WTC11 (cell line): ENCODE measurements at regions of chr2 and their contacts with region 1.

Region 1: GRCh38 chr2:239934571-239935171 is 90.5 kb downstream of the NDUFA10 start:
- DNase-seq: peak; percentile 81
- ATAC-seq: peak; percentile 90
- H3K4me3 Mint-ChIP-seq: no peak overlapping the region
- H3K27ac Mint-ChIP-seq: no peak overlapping the region
- H3K4me1 Mint-ChIP-seq: no peaks in the 10 kb centered on the region; the same call in 1 of the 2 replicates
- H3K27me3 Mint-ChIP-seq: no peaks in the 10 kb centered on the region; the same call in 1 of the 2 replicates
- CTCF ChIP-seq: peak; percentile 76

Region 2: DNA sequence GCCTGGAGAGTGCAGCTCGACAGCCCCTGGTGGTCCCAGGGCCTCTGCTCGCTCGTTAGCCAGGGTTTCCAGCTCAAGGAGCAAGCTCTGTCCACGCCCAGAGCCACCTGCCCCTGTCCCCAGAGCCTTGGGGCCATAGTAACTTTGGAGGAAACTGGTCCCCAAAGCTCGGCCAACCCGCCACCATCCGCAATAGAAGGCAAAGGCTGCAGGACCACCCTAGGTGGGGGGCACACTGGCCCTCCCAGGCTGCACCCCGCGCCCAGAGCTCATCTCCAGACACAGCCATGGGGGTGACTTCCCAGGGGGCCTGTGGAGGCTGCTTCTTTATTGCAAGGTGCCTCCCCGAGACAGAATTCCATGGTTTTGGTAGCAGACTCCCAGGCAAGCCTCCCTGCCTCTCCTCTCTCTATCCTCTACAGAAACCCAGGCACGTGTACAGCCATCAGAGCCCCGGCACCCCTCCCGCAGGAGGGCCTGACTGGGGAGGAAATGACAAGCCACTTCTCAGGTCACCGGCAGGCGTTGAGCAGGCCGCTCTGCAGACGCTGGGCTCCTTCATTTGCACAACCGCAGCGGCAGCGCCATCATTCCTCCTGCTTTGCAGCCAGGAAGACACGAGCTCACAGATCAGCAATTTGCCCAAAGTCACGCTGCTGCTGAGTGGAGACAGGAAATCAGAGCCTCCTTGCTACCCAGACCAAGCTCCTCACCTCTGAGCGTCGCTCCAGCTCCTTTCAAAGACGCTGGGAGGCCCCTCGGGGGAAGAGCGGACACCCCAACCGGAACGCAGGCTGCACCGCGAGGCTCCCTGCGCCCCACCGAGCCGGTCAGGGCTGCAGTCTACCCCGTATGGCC is 10.3 kb after region 1 on chr2:
- CTCF ChIA-PET with region 1: interaction called, 22 read pairs
- POLR2A ChIA-PET with region 1: no interaction called
- DNase-seq: no peak
- ATAC-seq: no peak
- H3K4me3 Mint-ChIP-seq: no peak overlapping the region
- H3K27ac Mint-ChIP-seq: peak overlapping the region; percentile 49
- H3K4me1 Mint-ChIP-seq: 0 out of 2 replicates have a peak, but pooled peaks cover 3% of the 10 kb centered on the region
- H3K27me3 Mint-ChIP-seq: no peaks in the 10 kb centered on the region
- CTCF ChIP-seq: no peak

Region 3: DNA sequence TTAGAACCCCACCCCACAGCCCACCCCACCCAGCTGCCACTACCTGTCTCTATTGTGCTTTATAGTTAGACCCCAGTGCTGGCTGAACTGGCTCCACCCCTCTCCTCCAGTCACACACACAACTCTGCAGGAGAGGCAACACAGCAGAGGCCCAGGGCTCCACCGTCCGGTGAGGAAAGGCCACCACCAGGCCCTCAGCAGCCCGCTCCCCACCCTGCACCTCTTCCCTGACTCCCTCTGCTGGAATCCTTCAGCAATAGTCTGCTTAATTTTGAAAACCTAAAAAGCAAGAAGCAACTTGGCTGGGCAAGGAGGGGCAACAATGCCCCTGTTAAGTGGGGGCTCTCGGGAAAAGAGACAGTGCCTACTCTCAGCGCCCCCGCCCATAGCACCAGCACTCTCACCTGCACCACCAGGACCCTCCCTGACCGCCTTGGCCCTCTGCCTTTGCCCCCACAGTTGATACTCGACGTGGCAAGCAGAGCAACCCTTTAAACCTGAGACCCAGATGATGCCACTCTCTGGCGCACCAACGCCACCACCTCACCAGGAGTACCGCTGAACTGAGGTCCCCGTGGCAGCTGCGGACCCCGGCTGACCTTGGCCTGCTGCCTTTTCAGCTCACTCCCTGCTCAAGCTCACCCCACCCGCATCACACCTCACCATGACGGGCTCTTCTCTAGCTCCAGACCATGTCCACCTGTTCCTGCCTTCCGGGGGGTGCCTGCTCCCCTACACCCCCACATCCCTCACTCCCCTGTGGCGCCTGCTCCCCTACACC is 44.8 kb after region 1 on chr2:
- CTCF ChIA-PET with region 1: interaction called, 10 read pairs
- POLR2A ChIA-PET with region 1: no interaction called
- DNase-seq: peak; percentile 69
- ATAC-seq: peak; percentile 98
- H3K4me3 Mint-ChIP-seq: no peak overlapping the region
- H3K27ac Mint-ChIP-seq: peak overlapping the region; percentile 72; the same call in 1 of the 2 replicates
- H3K4me1 Mint-ChIP-seq: peaks cover 6% of the 10 kb centered on the region; the same call in 1 of the 2 replicates
- H3K27me3 Mint-ChIP-seq: no peaks in the 10 kb centered on the region
- CTCF ChIP-seq: no peak